ENCODE measurements at regions of chr1 and their contacts with region 1.

Region 1: GRCh38 chr1:153922972-153923925 is at the start of gene GATAD2B:
- DNase-seq: peak; percentile 96 to 100 (median 99)

Region 2: GRCh38 chr1:153827168-153827964 is 95.9 kb before region 1 on chr1:
- intact Hi-C with region 1: loop called (anchors 5 kb)
- DNase-seq: no peak

Region 3: GRCh38 chr1:153946622-153947241 is 23.5 kb after region 1 on chr1 and contains the start of gene DENND4B:
- intact Hi-C with region 1: loop called (anchors 2 kb)
- DNase-seq: peak; percentile 48 to 94 (median 85)

Region 4: DNA sequence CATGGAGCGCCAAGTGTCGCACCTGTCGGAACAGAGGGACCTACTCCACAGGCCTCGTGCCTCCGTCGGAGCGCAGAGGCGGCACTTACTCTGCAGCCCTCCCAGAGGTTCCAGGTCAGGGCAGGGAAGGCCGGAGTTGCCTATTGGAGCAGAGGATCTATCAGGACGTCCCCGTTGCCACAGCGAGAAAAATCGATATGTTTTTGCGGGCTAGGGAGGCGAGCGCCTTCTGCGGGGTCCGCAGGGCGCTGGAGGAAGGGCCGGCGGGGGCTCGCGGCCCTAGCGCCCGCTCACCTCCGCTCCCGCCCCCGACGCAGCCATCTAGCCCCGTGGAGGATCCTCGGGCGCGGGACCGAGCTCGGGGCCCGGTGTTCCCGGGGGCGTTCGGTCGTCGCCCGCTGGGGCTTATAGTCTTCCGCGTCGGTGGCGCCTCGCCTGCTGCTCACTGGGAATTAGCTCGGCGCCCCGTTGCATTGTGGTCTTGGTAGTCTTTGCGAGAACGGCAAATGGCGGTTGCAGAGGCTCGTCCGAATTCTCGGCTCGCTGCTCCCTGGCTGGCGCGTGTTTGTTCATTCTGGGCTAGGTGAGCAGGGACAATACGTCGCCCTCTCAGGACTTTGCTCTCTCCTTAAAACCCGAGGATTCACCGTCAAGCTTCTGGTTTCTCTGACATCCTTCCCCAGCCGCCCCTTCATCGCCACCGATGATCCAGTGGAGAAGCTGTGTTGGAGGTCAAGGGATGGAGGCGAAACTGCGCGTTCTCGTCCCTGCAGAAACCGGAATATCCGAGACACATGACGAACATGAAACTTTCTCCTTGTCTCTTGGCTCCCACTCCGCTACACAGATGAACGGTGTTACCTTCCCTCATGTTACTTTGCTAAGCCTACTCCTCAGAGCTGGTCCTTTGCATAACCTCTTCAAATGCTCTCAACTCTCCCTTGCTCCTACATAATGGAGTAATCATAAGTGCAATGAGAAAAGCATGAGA is 54.3 kb after region 1 on chr1 and contains the start of gene JTB:
- intact Hi-C with region 1: no loop called
- DNase-seq: peak; percentile 87 to 97 (median 93)

Region 5: GRCh38 chr1:154081386-154082126 is 158.3 kb after region 1 on chr1:
- intact Hi-C with region 1: no loop called
- DNase-seq: no peak